Cardiac septum (tissue), 1 donor: ENCODE measurements at regions of chr2 and their contacts with region 1.

Region 1: DNA sequence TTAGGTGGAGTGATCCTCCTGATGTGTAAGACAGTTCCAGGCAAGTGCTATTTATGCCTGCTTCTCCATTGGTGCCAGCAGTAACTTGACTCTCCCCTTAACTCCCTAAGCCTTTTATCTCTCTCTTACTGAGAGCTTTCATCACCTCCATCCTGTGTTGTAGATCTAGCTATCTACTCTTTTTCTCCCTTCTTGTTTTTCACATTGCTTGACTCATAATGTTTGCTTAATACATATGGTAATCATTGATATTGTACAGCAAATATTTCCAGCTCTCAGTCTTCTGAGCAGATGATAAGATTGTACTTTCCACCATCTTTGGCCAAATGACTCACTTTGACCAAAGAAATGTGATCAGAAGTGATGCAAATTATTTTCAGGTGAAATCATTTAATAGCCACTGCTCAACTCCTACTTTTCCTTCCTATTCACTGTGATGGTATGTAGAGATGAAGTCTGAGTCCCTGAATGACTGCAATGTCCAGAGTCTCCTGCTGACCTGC is 165.0 kb downstream of the PLCL1 start:
- DNase-seq: no peak

Region 2: DNA sequence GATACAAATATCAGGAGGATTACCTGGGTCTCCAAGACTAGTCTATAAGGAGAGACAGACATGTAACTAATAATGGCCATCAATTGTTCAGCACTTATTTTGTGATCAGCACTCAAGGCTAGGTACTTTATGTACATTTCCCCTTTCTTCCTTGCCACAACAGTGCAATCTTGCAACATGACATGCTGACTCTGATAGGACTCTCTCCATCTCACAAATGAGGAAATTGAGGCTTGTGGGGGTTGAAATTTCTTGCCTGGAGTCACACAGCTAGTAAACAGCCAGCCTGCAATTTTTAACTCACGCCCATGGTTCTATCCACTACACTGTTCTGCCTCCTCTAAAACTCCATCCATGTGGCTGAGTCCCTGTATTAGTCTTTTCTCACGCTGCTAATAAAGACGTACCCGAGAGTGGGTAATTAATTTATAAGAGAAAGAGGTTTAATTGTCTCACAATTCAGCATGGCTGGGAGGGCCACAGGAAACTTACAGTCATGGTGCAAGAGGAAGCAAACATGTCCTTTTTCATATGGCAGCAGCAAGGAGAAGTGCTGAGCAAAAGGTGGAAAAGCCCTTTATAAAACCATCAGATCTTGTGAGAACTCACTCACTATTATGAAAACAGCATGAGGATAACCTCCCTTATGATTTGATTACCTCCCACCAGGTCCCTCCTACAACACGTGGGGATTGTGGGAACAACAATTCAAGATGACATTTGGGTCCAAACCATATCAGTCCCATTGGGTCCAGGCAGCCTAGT is 137.4 kb after region 1 on chr2:
- intact Hi-C with region 1: loop called (anchors 5 kb)
- DNase-seq: no peak